GM12878 (cell line): ENCODE measurements at regions of chr14 and their contacts with region 1.

Region 1: GRCh38 chr14:105045710-105046326 is 19.4 kb downstream of the GPR132 start:
- DNase-seq: no peak
- ATAC-seq: peak; percentile 84
- H3K4me3 ChIP-seq: no peak overlapping the region
- H3K27ac ChIP-seq: no peak overlapping the region
- H3K4me1 ChIP-seq: peaks cover 7% of the 10 kb centered on the region
- H3K27me3 ChIP-seq: no peaks in the 10 kb centered on the region
- CTCF ChIP-seq: peak; percentile 99 to 100 (median 100); a peak in 5 of 6 replicates
- EP300 ChIP-seq: no peak
- POLR2A ChIP-seq: peak; percentile 75
- RAD21 ChIP-seq: peak; percentile 91

Region 2: DNA sequence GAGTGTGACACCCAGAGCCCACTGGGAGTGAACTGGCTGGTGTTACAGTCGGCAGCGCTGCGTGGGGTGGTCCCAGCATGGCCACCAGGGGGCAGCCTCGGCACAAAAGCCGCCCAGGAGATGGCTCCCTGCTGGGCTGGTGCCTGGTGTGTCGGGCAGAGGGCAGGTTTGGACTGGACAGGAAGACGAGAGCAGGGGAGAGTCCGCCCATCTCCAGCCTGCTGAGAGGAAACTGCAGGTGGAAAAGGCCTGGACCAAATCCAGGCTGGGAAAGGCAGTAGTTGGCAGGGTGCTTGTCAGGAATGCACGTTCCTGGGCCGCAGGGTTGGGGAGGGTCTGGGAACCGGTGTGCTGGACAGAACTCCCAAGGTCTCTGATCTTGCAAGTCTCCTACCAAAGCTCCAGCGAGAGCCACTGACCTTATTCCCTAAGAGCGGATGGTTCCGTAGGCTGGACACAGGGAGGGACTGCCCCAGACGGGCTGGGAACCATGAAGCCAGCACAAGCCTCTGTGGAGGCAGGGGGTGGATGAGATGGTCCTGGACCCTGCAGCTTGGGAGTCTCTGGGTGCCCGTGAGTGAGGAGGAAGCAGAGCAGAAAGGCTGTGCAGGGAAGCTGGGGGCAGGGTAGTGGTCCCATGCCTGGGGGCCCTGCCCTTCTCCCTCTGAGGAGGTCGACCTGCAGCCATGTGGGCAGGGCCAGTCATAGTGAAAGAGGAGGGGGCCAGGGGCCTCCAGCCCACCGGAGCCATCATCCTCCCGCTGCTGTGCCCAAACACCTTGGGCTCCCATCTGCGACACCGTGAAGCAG is 69.4 kb before region 1 on chr14:
- CTCF ChIA-PET with region 1: interaction called, 82 read pairs
- POLR2A ChIA-PET with region 1: no interaction called
- RAD21 ChIA-PET with region 1: interaction called, 26 read pairs
- SMC1A ChIA-PET with region 1: interaction called, 24 read pairs
- in situ Hi-C with region 1: loop called (anchors 5 kb)
- intact Hi-C with region 1: loop called (anchors 1 kb)
- DNase-seq: peak; percentile 5
- ATAC-seq: peak; percentile 95
- H3K4me3 ChIP-seq: no peak overlapping the region
- H3K27ac ChIP-seq: no peak overlapping the region
- H3K4me1 ChIP-seq: no peaks in the 10 kb centered on the region; the same call in 1 of the 2 replicates
- H3K27me3 ChIP-seq: peaks cover 7 to 10% of the 10 kb centered on the region in 2 experiments
- CTCF ChIP-seq: peak; percentile 88 to 97 (median 97); a peak in 5 of 6 replicates
- EP300 ChIP-seq: no peak
- POLR2A ChIP-seq: no peak
- RAD21 ChIP-seq: peak; percentile 92

Region 3: GRCh38 chr14:105013150-105013785 is 32.5 kb before region 1 on chr14:
- CTCF ChIA-PET with region 1: interaction called, 25 read pairs
- POLR2A ChIA-PET with region 1: interaction called, 4 read pairs
- RAD21 ChIA-PET with region 1: interaction called, 3 read pairs
- SMC1A ChIA-PET with region 1: interaction called, 13 read pairs
- in situ Hi-C with region 1: no loop called
- intact Hi-C with region 1: no loop called
- DNase-seq: no peak
- ATAC-seq: peak; percentile 67
- H3K4me3 ChIP-seq: 0 out of 2 replicates have a peak overlapping the region, but pooled peaks have one; percentile 3
- H3K27ac ChIP-seq: no peak overlapping the region
- H3K4me1 ChIP-seq: peaks cover 20% of the 10 kb centered on the region
- H3K27me3 ChIP-seq: no peaks in the 10 kb centered on the region
- CTCF ChIP-seq: peak in 1 of 3 experiments; percentile 14; a peak in 1 of 6 replicates
- EP300 ChIP-seq: no peak
- POLR2A ChIP-seq: no peak
- RAD21 ChIP-seq: no peak

Region 4: DNA sequence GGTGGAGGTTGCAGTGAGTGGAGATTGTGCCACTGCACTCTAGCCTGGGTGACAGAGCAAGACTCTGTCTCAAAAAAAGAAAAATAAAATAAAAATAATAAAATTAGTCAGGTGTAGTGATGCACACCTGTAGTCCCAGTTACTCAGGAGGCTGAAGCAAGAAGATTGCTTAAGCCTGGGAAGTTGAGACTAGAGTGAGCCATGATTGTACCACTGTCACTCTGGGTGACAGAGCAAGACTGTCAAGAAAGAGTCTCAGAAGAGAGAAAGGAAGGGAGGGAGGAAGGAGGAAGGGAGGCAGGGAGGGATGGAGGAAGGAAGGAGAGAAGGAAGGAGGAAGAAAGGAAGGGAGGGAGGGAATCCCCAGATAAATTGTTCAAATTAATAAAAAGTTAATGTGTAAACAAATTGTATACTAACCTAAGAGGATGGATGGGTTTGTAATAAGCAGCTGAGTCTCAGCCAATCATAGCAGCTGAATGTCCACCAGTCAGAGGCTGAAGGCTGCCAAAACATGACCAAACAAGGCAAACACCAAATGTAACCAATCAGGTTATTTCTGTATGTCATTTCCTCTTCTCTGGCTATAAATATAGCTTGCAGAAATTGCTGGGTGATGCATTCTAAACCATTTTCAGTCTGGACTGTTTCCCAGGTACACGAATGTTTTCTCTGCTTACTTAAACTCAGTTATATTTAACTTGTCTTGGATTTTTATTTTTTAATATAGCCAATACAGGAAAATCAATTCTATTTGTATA is 18.8 kb before region 1 on chr14:
- CTCF ChIA-PET with region 1: interaction called, 28 read pairs
- POLR2A ChIA-PET with region 1: no interaction called
- RAD21 ChIA-PET with region 1: interaction called, 7 read pairs
- SMC1A ChIA-PET with region 1: interaction called, 5 read pairs
- in situ Hi-C with region 1: no loop called
- intact Hi-C with region 1: loop called (anchors 2 kb)
- DNase-seq: no peak
- ATAC-seq: peak; percentile 49
- H3K4me3 ChIP-seq: no peak overlapping the region
- H3K27ac ChIP-seq: peak overlapping the region; percentile 84
- H3K4me1 ChIP-seq: peaks cover 21% of the 10 kb centered on the region
- H3K27me3 ChIP-seq: no peaks in the 10 kb centered on the region
- CTCF ChIP-seq: no peak
- EP300 ChIP-seq: no peak
- POLR2A ChIP-seq: no peak
- RAD21 ChIP-seq: no peak

Region 5: DNA sequence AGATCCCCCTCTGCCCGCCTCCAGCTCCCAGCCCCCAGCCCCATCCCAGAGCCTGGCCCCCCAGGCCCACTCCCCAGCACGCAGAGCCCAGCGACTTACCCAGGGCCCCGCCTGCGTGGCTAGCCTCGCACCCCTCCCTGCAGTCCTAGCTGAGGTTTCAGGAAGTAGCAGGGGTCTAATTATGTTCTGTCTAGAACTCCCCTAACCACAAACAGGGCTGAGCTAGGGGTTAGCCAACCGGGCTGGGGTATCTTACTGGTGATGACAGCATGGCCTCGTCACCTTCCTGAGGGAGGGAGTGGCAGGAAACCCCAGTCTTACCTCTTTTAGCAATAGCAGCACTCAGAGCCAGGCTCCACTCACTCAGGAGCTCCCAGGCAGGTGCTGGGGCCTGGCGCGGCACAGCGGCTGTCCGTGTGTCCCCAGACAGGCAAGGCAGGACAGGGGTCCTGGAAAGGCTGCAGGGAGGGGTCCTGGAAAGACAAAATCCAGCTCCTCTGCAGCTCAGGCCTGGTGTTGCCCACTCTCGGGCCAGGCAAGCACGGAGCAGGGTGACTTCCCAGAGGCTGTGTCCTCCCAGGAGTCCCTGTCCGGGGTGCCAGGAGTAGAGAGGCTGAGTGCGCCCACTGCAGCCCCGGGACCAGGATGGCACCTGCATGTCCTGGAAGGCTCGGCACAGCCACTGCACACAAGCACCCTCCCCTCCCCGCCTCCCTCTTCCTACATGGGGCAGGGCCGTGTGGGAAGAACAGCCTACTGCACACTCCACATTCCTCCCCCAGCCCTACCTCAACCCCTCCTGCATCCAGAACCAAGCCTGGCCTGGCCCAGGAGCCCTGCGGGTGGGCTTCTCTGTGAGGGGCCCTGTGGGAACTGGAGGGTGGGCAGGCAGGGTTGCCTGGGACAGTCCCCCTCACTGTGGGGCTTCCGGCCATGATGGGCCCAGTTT is 19.7 kb after region 1 on chr14 and contains the start of gene GPR132:
- CTCF ChIA-PET with region 1: interaction called, 20 read pairs
- POLR2A ChIA-PET with region 1: interaction called, 3 read pairs
- RAD21 ChIA-PET with region 1: interaction called, 11 read pairs
- SMC1A ChIA-PET with region 1: interaction called, 5 read pairs
- in situ Hi-C with region 1: no loop called
- intact Hi-C with region 1: no loop called
- DNase-seq: peak; percentile 93
- ATAC-seq: peak; percentile 54
- H3K4me3 ChIP-seq: peak within 1 kb of the TSS; percentile 64
- H3K27ac ChIP-seq: peak within 1 kb of the TSS; percentile 93
- H3K4me1 ChIP-seq: peaks cover 69% of the 10 kb centered on the region
- H3K27me3 ChIP-seq: no peaks in the 10 kb centered on the region
- CTCF ChIP-seq: no peak
- EP300 ChIP-seq: peak; percentile 67; a peak in 2 of 4 replicates
- POLR2A ChIP-seq: peak; percentile 91
- RAD21 ChIP-seq: no peak
- polyA plus RNA-seq, gene GPR132: 1.9 to 2.2 TPM

Region 6: DNA sequence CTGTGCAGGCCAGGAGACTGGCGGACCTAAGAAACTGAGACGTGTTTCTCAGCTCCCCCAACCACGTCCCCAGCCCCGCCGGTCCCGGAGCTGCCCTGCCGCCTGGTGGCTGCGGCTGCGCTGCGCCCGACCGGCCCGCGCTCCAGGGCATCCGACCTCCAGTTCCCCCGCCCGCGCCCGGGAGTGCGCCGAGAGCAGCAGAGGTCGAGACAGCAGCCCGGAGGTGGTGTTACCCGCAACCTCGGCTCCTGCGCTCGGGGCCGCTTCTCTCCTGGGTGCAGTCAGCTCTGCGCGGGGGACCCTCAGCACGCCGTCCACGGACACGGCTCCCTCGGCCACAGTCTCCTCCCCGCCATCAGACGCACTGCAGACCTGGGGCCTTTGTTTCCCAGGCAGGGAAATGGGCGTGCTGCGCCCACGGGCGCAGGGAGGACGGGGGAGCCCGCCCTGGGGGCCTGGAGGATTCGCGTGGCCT is 41.1 kb after region 1 on chr14:
- CTCF ChIA-PET with region 1: interaction called, 24 read pairs
- POLR2A ChIA-PET with region 1: interaction called, 4 read pairs
- RAD21 ChIA-PET with region 1: interaction called, 7 read pairs
- SMC1A ChIA-PET with region 1: interaction called, 23 read pairs
- in situ Hi-C with region 1: no loop called
- intact Hi-C with region 1: loop called (anchors 1 kb)
- DNase-seq: no peak
- ATAC-seq: peak; percentile 89
- H3K4me3 ChIP-seq: peak overlapping the region; percentile 76; the same call in 1 of the 2 replicates
- H3K27ac ChIP-seq: peak overlapping the region; percentile 76
- H3K4me1 ChIP-seq: peaks cover 27% of the 10 kb centered on the region
- H3K27me3 ChIP-seq: no peaks in the 10 kb centered on the region
- CTCF ChIP-seq: peak; percentile 70 to 96 (median 91); a peak in 5 of 6 replicates
- EP300 ChIP-seq: no peak
- POLR2A ChIP-seq: peak; percentile 69
- RAD21 ChIP-seq: peak; percentile 83